ENCODE measurements at regions of chr6 and their contacts with region 1.

Region 1: GRCh38 chr6:116680975-116681808 is at the start of gene KPNA5:
- DNase-seq: peak; percentile 84 to 96 (median 88)
- ATAC-seq: peak; percentile 94
- H3K4me3 ChIP-seq: peak within 1 kb of the TSS; percentile 80
- H3K27ac ChIP-seq: peak within 1 kb of the TSS; percentile 94
- H3K4me1 ChIP-seq: peaks cover 3 to 6% of the 10 kb centered on the region in 2 experiments; a peak in 2 of 5 replicates
- H3K27me3 ChIP-seq: no peaks in the 10 kb centered on the region
- CTCF ChIP-seq: no peak
- EP300 ChIP-seq: no peak
- POLR2A ChIP-seq: peak; percentile 70
- RAD21 ChIP-seq: no peak
- polyA plus RNA-seq, gene KPNA5: 3.2 to 3.3 TPM

Region 2: GRCh38 chr6:116633685-116634084 is 47.5 kb before region 1 on chr6:
- CTCF ChIA-PET with region 1: no interaction called
- POLR2A ChIA-PET with region 1: no interaction called
- in situ Hi-C with region 1: no loop called
- intact Hi-C with region 1: loop called (anchors 1 kb)
- DNase-seq: peak in 2 of 4 experiments; percentile 16 to 25
- ATAC-seq: peak; percentile 61
- H3K4me3 ChIP-seq: no peak overlapping the region
- H3K27ac ChIP-seq: no peak overlapping the region
- H3K4me1 ChIP-seq: peaks cover 0 to 12% of the 10 kb centered on the region in 2 experiments; a peak in 2 of 5 replicates
- H3K27me3 ChIP-seq: no peaks in the 10 kb centered on the region
- CTCF ChIP-seq: peak; percentile 29 to 32 (median 32); a peak in 3 of 6 replicates
- EP300 ChIP-seq: no peak
- POLR2A ChIP-seq: no peak
- RAD21 ChIP-seq: no peak

Region 3: GRCh38 chr6:116667623-116668022 is 13.6 kb before region 1 on chr6:
- CTCF ChIA-PET with region 1: interaction called, 3 read pairs
- POLR2A ChIA-PET with region 1: interaction called, 15 read pairs
- in situ Hi-C with region 1: no loop called
- intact Hi-C with region 1: loop called (anchors 1 kb)
- DNase-seq: peak in 1 of 4 experiments; percentile 35
- ATAC-seq: peak; percentile 23
- H3K4me3 ChIP-seq: peak overlapping the region; percentile 62
- H3K27ac ChIP-seq: peak overlapping the region; percentile 83
- H3K4me1 ChIP-seq: peaks cover 0 to under 1% of the 10 kb centered on the region in 2 experiments; a peak in 3 of 5 replicates
- H3K27me3 ChIP-seq: no peaks in the 10 kb centered on the region
- CTCF ChIP-seq: no peak
- EP300 ChIP-seq: no peak
- POLR2A ChIP-seq: no peak
- RAD21 ChIP-seq: no peak